Ovary (tissue), 10 donors: ENCODE measurements at regions of chr13 and their contacts with region 1.

Region 1: DNA sequence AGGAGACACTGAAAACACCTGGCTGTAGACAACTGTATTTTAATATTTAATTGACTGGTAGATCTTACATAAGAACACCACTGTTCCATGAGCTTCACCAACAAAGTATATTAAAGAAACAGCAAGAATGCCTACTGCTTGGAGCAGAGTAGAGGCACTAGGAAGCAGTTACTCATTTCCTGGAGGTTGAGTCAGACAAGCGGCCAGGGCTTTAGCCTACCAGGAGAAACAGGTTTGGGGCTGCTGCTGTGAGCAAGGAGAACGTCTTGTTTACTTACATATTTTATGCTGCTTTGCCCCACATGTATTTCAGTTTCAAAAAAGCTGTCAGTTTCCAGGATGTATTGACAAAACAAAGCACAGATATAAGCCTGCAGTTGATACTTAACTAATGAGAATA is 33.4 kb downstream of the ALG5 start:
- DNase-seq: no peak
- H3K4me3 ChIP-seq: no peak overlapping the region
- H3K27ac ChIP-seq: no peak overlapping the region
- H3K4me1 ChIP-seq: no peaks in the 10 kb centered on the region
- H3K27me3 ChIP-seq: no peaks in the 10 kb centered on the region
- CTCF ChIP-seq: no peak
- EP300 ChIP-seq: no peak
- POLR2A ChIP-seq: no peak

Region 2: GRCh38 chr13:35729926-35730627 is 1235.7 kb before region 1 on chr13:
- intact Hi-C with region 1: loop called in 1 of 4 experiments (anchors 5 kb)
- DNase-seq: no peak
- H3K4me3 ChIP-seq: no peak overlapping the region
- H3K27ac ChIP-seq: no peak overlapping the region
- H3K4me1 ChIP-seq: peaks cover 4% of the 10 kb centered on the region
- H3K27me3 ChIP-seq: no peaks in the 10 kb centered on the region
- CTCF ChIP-seq: no peak
- EP300 ChIP-seq: no peak
- POLR2A ChIP-seq: no peak